Sigmoid colon (tissue), 7 donors: ENCODE measurements at regions of chr13 and their contacts with region 1.

Region 1: DNA sequence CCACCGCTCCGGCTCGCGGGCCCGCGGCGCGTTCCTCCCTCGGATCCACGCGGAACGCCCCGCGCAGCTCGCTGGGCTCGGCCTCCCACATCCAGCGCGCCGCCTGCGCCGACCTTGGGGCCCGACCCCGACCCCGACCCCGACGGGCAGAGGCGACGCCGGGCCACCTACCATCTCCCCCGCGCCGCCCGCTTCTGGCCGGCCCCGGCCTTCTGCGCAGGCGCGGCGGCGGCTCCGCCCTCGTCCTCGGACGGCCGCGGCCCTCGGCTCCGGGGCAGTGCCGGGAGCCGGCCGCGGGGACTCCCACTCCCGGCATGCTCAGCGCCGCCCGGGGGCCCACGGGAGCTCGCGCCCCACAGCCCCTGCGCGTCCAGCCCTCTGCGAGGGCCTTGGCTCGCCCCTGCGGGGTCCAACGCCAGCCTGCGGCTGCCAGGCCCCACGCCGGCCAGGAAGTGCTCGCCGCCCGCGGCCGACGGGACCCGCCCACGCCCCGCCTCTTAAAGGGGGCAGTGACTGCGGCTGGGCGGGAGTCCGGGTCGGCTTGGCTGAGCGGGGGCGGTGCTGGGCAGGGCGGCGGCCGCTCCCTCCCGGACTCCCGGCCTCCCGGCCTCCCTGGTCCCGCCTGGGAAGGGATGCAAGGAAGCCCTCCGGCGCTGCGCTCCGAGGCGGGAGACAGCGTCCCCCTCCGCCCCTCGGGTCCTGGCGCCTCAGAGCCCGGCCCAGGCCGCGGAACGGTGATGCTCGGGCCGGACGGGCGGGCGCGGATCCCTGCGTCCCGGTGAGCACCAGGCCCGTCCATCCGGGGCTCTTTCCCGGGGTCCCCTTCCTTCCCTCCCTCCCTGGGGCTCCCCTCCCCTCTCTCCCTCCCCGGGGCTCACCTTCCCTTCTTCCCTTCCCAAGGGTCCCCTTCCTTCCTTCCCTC is at the start of gene DCUN1D2:
- DNase-seq: peak; percentile 97
- H3K4me3 ChIP-seq: peak within 1 kb of the TSS; percentile 88 to 94 (median 92)
- H3K27ac ChIP-seq: peak within 1 kb of the TSS; percentile 87 to 95 (median 93)
- H3K4me1 ChIP-seq: peaks cover 0 to 84% (median 68%) of the 10 kb centered on the region in 4 donors
- H3K27me3 ChIP-seq: no peaks in the 10 kb centered on the region
- CTCF ChIP-seq: no peak
- EP300 ChIP-seq: no peak
- POLR2A ChIP-seq: peak; percentile 64 to 75
- total RNA-seq, gene DCUN1D2: 20.6 to 33.0 (median 27.6) TPM

Region 2: DNA sequence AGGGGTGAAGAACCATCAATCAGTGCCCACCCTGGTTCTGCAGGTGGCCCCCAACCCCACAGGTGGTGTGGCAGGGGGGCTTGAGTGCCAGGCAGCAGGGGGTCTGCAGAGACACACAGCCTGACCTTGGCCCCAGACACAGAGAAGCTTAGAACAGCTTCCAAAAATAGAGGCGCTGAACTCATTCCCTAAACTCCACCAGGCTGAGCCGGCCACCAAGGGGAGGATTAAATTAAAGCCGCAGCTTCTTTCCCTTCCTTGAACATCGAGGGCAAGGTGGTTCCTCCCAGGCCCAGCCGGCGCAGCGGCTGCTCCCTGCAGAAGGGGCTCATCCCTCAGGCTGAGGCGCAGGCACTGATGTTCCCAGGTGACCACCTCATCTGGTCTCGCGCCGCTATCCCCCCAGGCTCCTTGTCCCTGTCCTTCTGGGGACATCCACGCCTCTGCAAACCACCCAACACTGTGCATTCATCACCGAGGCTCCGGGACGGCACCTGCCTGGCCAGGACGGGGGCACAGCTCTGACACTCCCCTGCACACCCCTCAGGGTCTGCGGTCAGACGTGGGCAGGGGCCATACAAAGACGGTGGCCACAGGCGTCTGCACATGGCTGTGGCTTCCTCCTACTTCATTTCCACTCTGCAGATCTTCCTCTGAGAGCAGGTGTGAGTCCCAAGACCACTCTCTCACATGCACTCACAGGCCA is 162.8 kb before region 1 on chr13:
- intact Hi-C with region 1: no loop called
- DNase-seq: no peak
- H3K4me3 ChIP-seq: no peak overlapping the region
- H3K27ac ChIP-seq: no peak overlapping the region
- H3K4me1 ChIP-seq: no peaks in the 10 kb centered on the region
- H3K27me3 ChIP-seq: no peaks in the 10 kb centered on the region
- CTCF ChIP-seq: no peak
- EP300 ChIP-seq: no peak
- POLR2A ChIP-seq: no peak

Region 3: DNA sequence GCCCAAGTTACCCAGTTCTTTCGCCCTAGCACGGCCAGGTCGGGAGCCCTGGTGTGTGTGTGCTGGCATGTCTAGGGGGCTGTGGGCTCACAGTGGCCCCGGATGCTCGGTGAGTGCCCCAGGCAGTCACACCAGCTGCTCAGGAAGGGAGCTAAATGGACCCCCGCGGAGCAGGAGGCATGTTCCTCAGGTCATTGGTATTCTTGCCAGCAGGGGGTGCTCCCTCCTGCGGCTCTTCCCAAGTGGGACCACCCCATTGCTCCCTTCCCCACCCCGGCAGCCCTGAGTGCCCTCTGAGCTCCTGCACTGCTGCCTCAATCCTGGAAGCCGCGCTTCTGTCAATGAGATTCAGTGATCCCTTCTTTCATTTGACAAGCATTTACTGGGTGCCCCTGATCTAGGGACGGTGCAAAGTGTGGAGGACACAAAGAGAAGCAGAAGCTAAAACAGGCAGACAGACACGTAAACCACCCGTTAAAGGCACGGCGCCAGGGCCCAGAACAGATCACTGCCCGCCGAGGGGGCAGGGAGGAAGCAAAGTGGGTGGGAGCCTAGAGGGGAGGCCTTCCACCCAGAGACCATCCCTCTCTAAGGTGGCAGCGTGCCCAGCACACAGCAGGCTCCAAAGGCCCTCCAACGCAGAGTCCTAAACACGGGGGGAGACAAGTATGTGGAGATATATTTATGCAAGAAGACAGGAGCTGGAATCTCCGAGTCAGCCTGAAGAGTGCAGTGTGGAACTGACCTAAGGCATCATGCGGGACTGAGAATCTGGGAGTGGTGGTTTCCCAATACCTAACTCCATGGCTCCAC is 32.3 kb before region 1 on chr13:
- intact Hi-C with region 1: loop called (anchors 2 kb)
- DNase-seq: peak; percentile 77
- H3K4me3 ChIP-seq: peak overlapping the region in 1 of 4 donors; percentile 0
- H3K27ac ChIP-seq: peak overlapping the region in 3 of 4 donors; percentile 63 to 76 (median 68)
- H3K4me1 ChIP-seq: peaks cover 0 to 34% (median 23%) of the 10 kb centered on the region in 4 donors
- H3K27me3 ChIP-seq: no peaks in the 10 kb centered on the region
- CTCF ChIP-seq: peak in 3 of 4 experiments; percentile 28 to 45 (median 32)
- EP300 ChIP-seq: no peak
- POLR2A ChIP-seq: no peak

Region 4: DNA sequence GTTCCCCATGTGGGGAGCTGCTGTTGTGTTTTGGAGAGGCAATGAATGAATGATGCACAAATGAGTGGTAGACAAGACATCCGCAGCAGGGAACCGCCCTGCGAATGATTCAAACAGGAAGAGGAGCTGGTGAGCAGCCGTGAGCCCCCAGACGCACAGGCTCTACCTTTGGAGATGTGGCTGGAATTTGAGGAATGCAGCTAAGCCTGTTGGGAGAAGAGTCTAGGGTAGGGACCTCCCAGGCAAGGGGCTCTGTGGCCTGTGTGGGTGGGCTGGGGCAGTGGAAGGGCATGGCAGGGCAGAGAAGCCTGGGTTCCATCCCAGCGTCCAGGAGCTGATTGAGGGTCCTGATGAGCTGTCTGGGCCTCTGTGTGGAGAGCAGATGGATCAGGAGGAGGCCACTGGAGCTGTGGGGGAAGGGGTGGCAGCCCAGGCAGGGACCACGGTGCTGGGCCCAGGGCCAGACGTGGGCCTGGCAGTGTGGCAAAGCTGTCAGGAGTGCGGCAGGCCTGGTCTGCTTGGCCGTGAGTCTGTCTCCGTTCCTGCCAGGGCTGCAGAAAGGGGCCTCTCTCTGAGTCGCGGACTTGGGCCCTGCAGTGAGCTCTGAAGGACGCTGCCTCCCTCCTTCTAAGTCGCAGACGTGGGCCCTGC is 41.5 kb after region 1 on chr13:
- intact Hi-C with region 1: loop called (anchors 5 kb)
- DNase-seq: peak; percentile 56
- H3K4me3 ChIP-seq: no peak overlapping the region
- H3K27ac ChIP-seq: peak overlapping the region in 3 of 4 donors; percentile 50 to 71 (median 53)
- H3K4me1 ChIP-seq: peaks cover 0 to 21% (median 15%) of the 10 kb centered on the region in 4 donors
- H3K27me3 ChIP-seq: no peaks in the 10 kb centered on the region
- CTCF ChIP-seq: no peak
- EP300 ChIP-seq: no peak
- POLR2A ChIP-seq: no peak

Region 5: GRCh38 chr13:113832204-113832603 is 341.4 kb after region 1 on chr13:
- intact Hi-C with region 1: no loop called
- DNase-seq: no peak
- H3K4me3 ChIP-seq: no peak overlapping the region
- H3K27ac ChIP-seq: no peak overlapping the region
- H3K4me1 ChIP-seq: peaks cover 0 to 12% (median 5%) of the 10 kb centered on the region in 4 donors
- H3K27me3 ChIP-seq: no peaks in the 10 kb centered on the region
- CTCF ChIP-seq: no peak
- EP300 ChIP-seq: no peak
- POLR2A ChIP-seq: no peak